CD8-positive, alpha-beta T cell (primary cell): ENCODE measurements at regions of chrX and their contacts with region 1.

Region 1: DNA sequence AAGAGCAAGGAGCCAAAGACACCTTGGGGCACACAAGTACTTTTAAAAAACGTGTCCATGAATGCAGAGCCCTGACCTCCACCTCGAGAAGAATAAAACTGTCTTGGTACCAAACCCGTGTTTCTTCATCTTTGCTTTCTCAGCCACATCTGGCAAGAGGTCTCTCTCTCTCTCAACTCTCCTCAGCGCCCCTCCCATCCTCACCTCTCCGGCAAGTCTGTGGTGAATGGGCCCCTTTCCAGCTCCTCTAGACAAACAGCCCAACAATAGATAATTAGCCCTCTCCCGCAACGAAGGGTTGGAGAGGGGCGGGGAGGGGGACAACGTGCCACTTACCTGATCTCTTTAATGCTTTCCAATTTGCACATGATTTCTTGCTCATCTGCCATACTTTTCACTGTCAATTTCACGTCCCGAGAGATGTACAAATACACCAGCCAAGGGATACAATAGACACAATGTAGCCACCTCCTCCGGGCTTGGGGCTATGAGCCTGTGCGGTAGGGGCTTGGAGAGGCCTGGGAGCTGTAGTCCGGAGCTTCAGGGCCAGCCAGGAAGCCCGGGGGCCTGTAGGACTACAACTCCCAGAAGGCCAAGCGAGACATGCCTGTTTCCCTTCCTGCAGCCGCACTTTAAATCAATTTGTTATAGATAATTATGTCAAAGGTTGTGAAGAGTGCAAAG is at the start of gene ZC4H2:
- DNase-seq: peak; percentile 31 to 81 (median 65)
- ATAC-seq: peak; percentile 95
- H3K4me3 ChIP-seq: peak within 1 kb of the TSS; percentile 60 to 81
- H3K4me3 Mint-ChIP-seq: peak within 1 kb of the TSS; percentile 95
- H3K27ac ChIP-seq: peak within 1 kb of the TSS; percentile 31 to 37
- H3K27ac Mint-ChIP-seq: peak within 1 kb of the TSS; percentile 91
- H3K4me1 ChIP-seq: peaks cover 10% of the 10 kb centered on the region
- H3K4me1 Mint-ChIP-seq: peaks cover 33% of the 10 kb centered on the region
- H3K27me3 ChIP-seq: no peaks in the 10 kb centered on the region
- H3K27me3 Mint-ChIP-seq: no peaks in the 10 kb centered on the region
- CTCF ChIP-seq: no peak
- total RNA-seq, gene ZC4H2: 3.2 to 6.5 TPM

Region 2: GRCh38 chrX:63560601-63561218 is 1415.4 kb before region 1 on chrX:
- CTCF ChIA-PET with region 1: no interaction called
- POLR2A ChIA-PET with region 1: no interaction called
- intact Hi-C with region 1: loop called in 1 of 2 experiments (anchors 10 kb)
- DNase-seq: peak; percentile 3 to 78 (median 53)
- ATAC-seq: peak; percentile 86
- H3K4me3 ChIP-seq: peak overlapping the region; percentile 71 to 93
- H3K4me3 Mint-ChIP-seq: peak overlapping the region; percentile 93
- H3K27ac ChIP-seq: peak overlapping the region; percentile 69 to 76
- H3K27ac Mint-ChIP-seq: peak overlapping the region; percentile 93
- H3K4me1 ChIP-seq: peaks cover 14% of the 10 kb centered on the region
- H3K4me1 Mint-ChIP-seq: peaks cover 37% of the 10 kb centered on the region
- H3K27me3 ChIP-seq: no peaks in the 10 kb centered on the region
- H3K27me3 Mint-ChIP-seq: no peaks in the 10 kb centered on the region
- CTCF ChIP-seq: no peak

Region 3: GRCh38 chrX:64205735-64206491 is 770.2 kb before region 1 on chrX:
- CTCF ChIA-PET with region 1: no interaction called
- POLR2A ChIA-PET with region 1: no interaction called
- intact Hi-C with region 1: loop called (anchors 2 to 5 kb)
- DNase-seq: peak; percentile 67 to 92 (median 86)
- ATAC-seq: peak; percentile 88
- H3K4me3 ChIP-seq: peak overlapping the region; percentile 57 to 82
- H3K4me3 Mint-ChIP-seq: peak overlapping the region; percentile 92
- H3K27ac ChIP-seq: peak overlapping the region; percentile 77 to 90
- H3K27ac Mint-ChIP-seq: peak overlapping the region; percentile 93
- H3K4me1 ChIP-seq: peaks cover 11% of the 10 kb centered on the region
- H3K4me1 Mint-ChIP-seq: peaks cover 23% of the 10 kb centered on the region
- H3K27me3 ChIP-seq: no peaks in the 10 kb centered on the region
- H3K27me3 Mint-ChIP-seq: no peaks in the 10 kb centered on the region
- CTCF ChIP-seq: no peak

Region 4: GRCh38 chrX:64908121-64908520 is 68.0 kb before region 1 on chrX:
- CTCF ChIA-PET with region 1: no interaction called
- POLR2A ChIA-PET with region 1: no interaction called
- intact Hi-C with region 1: no loop called
- DNase-seq: no peak
- ATAC-seq: no peak
- H3K4me3 ChIP-seq: no peak overlapping the region
- H3K4me3 Mint-ChIP-seq: no peak overlapping the region
- H3K27ac ChIP-seq: no peak overlapping the region
- H3K27ac Mint-ChIP-seq: no peak overlapping the region
- H3K4me1 ChIP-seq: no peaks in the 10 kb centered on the region
- H3K4me1 Mint-ChIP-seq: no peaks in the 10 kb centered on the region
- H3K27me3 ChIP-seq: no peaks in the 10 kb centered on the region
- H3K27me3 Mint-ChIP-seq: no peaks in the 10 kb centered on the region
- CTCF ChIP-seq: no peak

Region 5: DNA sequence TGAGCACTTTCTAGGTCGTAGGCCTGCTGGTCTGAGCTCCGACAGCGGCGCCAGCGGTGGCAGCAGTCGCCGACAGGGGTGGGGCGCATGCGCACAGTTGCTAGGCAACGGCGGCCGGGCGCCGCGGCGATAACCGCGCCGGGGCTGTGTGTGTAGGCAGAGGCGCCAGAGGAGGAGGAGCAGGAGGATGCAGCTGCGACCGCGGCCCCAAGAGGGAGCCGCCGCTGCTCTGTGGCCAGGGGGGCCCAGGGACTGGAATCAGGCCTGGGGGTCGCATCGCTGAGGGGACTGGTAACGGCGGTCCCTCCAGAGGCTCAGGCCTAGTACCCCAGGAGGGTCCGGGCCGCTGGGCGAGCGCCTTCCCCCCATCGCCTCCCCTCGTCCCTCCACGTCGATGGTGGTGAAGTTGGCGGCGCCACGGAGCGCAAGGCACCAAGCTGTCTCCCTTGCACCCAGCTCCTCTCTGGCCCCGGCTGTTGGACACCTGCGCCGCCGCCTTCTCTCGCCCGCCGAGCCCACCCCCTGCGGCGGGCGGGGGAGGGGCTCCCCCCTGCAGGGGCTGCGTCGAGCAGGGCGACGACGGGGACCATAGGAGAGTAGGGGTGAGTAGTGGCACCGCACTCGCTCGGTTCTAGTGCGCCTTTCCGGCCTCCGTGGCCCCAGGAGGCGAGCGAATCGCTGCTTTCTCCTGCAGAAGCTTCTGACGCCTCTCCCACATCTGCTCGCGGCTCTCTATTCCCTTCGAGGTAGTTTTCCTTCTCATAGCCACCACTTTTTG is 58.7 kb after region 1 on chrX:
- CTCF ChIA-PET with region 1: no interaction called
- POLR2A ChIA-PET with region 1: interaction called, 5 read pairs
- intact Hi-C with region 1: loop called (anchors 2 kb)
- DNase-seq: peak; percentile 59 to 89 (median 80)
- ATAC-seq: peak; percentile 85
- H3K4me3 ChIP-seq: peak within 1 kb of the TSS; percentile 64 to 66
- H3K4me3 Mint-ChIP-seq: peak within 1 kb of the TSS; percentile 94
- H3K27ac ChIP-seq: peak within 1 kb of the TSS; percentile 72 to 78
- H3K27ac Mint-ChIP-seq: peak within 1 kb of the TSS; percentile 96
- H3K4me1 ChIP-seq: peaks cover 10% of the 10 kb centered on the region
- H3K4me1 Mint-ChIP-seq: peaks cover 37% of the 10 kb centered on the region
- H3K27me3 ChIP-seq: no peaks in the 10 kb centered on the region
- H3K27me3 Mint-ChIP-seq: no peaks in the 10 kb centered on the region
- CTCF ChIP-seq: peak; percentile 46